Heart left ventricle (tissue), 16 donors: ENCODE measurements at regions of chr4 and their contacts with region 1.

Region 1: DNA sequence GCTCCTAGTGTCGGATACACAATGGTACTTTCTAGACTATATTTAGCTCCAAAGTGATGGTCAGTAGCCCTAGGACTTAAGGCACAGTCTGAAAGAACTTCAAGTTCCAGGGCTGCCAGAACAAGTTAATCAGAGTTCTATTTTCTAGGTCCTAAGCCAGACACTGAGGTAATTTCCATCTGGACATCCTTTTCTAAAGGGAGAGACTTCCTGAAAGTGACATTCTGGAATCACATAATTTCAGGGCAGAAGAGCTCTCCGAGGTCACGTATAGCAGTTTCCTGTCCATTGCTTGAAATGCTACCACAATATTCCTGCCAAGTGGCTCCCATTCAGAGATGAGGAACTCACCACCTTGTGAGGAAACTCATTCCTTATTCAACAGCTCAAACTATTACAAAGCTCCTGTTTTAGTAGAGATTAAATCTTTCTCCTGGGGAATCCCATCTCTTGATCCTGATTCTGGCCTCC is 117.9 kb downstream of the COL25A1 start:
- DNase-seq: peak in 4 of 5 donors; percentile 25 to 49 (median 35)
- ATAC-seq: peak; percentile 94 to 97 (median 95)
- H3K4me3 ChIP-seq: no peak overlapping the region
- H3K27ac ChIP-seq: peak overlapping the region; percentile 24 to 78 (median 60)
- H3K4me1 ChIP-seq: peaks cover 0 to 20% (median 12%) of the 10 kb centered on the region in 12 donors
- H3K27me3 ChIP-seq: no peaks in the 10 kb centered on the region
- CTCF ChIP-seq: peak in 2 of 12 donors; percentile 9 to 21
- POLR2A ChIP-seq: no peak

Region 2: GRCh38 chr4:109214622-109215301 is 30.2 kb after region 1 on chr4:
- intact Hi-C with region 1: loop called in 1 of 10 experiments (anchors 1 kb)
- DNase-seq: no peak
- ATAC-seq: peak in 2 of 4 donors; percentile 39 to 71
- H3K4me3 ChIP-seq: no peak overlapping the region
- H3K27ac ChIP-seq: peak overlapping the region in 8 of 12 donors; percentile 3 to 58 (median 17)
- H3K4me1 ChIP-seq: peaks cover 0 to 7% (median 0%) of the 10 kb centered on the region in 12 donors
- H3K27me3 ChIP-seq: no peaks in the 10 kb centered on the region
- CTCF ChIP-seq: no peak
- POLR2A ChIP-seq: no peak

Region 3: DNA sequence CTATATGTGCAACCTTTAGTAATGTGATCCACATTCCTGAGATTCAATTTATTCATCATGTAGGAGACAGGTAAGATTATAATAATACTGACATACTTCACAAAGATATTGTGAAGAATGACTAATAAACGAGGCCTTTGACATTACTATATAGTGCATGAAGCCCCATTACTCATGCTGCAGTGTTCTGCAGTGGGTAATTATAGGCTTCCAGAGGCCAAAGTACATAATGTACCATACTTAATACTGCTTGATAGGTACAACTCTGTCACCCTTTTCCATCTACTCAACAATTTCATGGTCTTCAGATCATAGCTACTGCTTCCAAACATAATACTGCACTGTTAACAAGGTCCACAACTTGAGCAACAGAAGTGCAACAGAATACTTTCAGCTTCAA is 49.1 kb after region 1 on chr4:
- intact Hi-C with region 1: no loop called
- DNase-seq: no peak
- ATAC-seq: no peak
- H3K4me3 ChIP-seq: no peak overlapping the region
- H3K27ac ChIP-seq: no peak overlapping the region
- H3K4me1 ChIP-seq: no peaks in the 10 kb centered on the region
- H3K27me3 ChIP-seq: no peaks in the 10 kb centered on the region
- CTCF ChIP-seq: no peak
- POLR2A ChIP-seq: no peak

Region 4: GRCh38 chr4:109315818-109316217 is 131.3 kb after region 1 on chr4:
- intact Hi-C with region 1: no loop called
- DNase-seq: no peak
- ATAC-seq: no peak
- H3K4me3 ChIP-seq: no peak overlapping the region
- H3K27ac ChIP-seq: no peak overlapping the region
- H3K4me1 ChIP-seq: no peaks in the 10 kb centered on the region
- H3K27me3 ChIP-seq: no peaks in the 10 kb centered on the region
- CTCF ChIP-seq: no peak
- POLR2A ChIP-seq: no peak